ENCODE measurements at regions of chr12 and their contacts with region 1.

Region 1: GRCh38 chr12:90940872-90941499 is 14.0 kb downstream of the CCER1 start:
- DNase-seq: peak; percentile 78
- ATAC-seq: peak; percentile 49
- H3K4me3 ChIP-seq: no peak overlapping the region
- H3K27ac ChIP-seq: no peak overlapping the region
- H3K4me1 ChIP-seq: peaks cover 38% of the 10 kb centered on the region
- H3K27me3 ChIP-seq: no peaks in the 10 kb centered on the region
- CTCF ChIP-seq: peak; percentile 83

Region 2: GRCh38 chr12:90695415-90695814 is 245.6 kb before region 1 on chr12:
- CTCF ChIA-PET with region 1: no interaction called
- POLR2A ChIA-PET with region 1: no interaction called
- intact Hi-C with region 1: loop called (anchors 1 kb)
- DNase-seq: peak; percentile 56
- ATAC-seq: peak; percentile 55
- H3K4me3 ChIP-seq: peak overlapping the region; percentile 3; the same call in 1 of the 2 replicates
- H3K27ac ChIP-seq: no peak overlapping the region
- H3K4me1 ChIP-seq: no peaks in the 10 kb centered on the region
- H3K27me3 ChIP-seq: no peaks in the 10 kb centered on the region
- CTCF ChIP-seq: peak; percentile 79

Region 3: GRCh38 chr12:90854136-90854689 is 86.8 kb before region 1 on chr12:
- CTCF ChIA-PET with region 1: no interaction called
- POLR2A ChIA-PET with region 1: interaction called, 6 read pairs
- intact Hi-C with region 1: loop called (anchors 1 kb)
- DNase-seq: peak; percentile 74
- ATAC-seq: peak; percentile 77
- H3K4me3 ChIP-seq: no peak overlapping the region
- H3K27ac ChIP-seq: no peak overlapping the region
- H3K4me1 ChIP-seq: peaks cover 15% of the 10 kb centered on the region
- H3K27me3 ChIP-seq: no peaks in the 10 kb centered on the region
- CTCF ChIP-seq: peak; percentile 89

Region 4: GRCh38 chr12:90922145-90922627 is 18.8 kb before region 1 on chr12:
- CTCF ChIA-PET with region 1: interaction called, 3 read pairs
- POLR2A ChIA-PET with region 1: no interaction called
- intact Hi-C with region 1: loop called (anchors 2 kb)
- DNase-seq: peak; percentile 79
- ATAC-seq: peak; percentile 96
- H3K4me3 ChIP-seq: no peak overlapping the region
- H3K27ac ChIP-seq: peak overlapping the region; percentile 57
- H3K4me1 ChIP-seq: peaks cover 14% of the 10 kb centered on the region
- H3K27me3 ChIP-seq: no peaks in the 10 kb centered on the region
- CTCF ChIP-seq: no peak

Measured in PC-3 (cell line).